Mammary epithelial cell (primary cell): ENCODE measurements at regions of chr1 and their contacts with region 1.

Region 1: DNA sequence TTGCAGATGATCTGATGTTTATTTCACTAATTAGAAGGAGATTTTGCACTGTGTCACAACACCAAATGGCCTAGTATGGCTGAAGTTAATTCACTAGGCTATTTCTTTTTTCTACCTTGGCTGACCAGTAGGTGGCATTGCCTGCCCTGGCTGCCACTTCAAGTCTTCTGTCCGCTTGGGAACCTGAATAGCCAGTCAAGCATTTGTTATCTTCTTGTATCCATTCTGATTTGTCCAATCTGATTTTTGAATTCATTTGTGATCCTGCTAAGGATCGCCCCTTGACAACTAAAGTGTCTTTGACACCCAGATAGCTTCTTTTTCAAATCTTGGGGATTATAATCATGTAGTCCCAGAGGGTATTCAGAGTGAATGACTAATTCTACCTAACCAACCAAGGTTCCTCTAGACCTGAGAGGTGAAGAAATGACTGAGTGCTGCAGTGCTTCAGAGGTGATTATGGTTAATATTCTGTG is 99.4 kb downstream of the GIPC2 start:
- DNase-seq: peak; percentile 63
- H3K4me3 ChIP-seq: no peak overlapping the region
- H3K27ac ChIP-seq: no peak overlapping the region
- H3K4me1 ChIP-seq: no peaks in the 10 kb centered on the region
- H3K27me3 ChIP-seq: no peaks in the 10 kb centered on the region
- CTCF ChIP-seq: peak; percentile 86 to 88

Region 2: GRCh38 chr1:78333502-78333901 is 188.4 kb after region 1 on chr1:
- CTCF ChIA-PET with region 1: no interaction called
- dilution Hi-C with region 1: no loop called
- in situ Hi-C with region 1: no loop called
- intact Hi-C with region 1: loop called (anchors 5 kb)
- DNase-seq: peak; percentile 11
- H3K4me3 ChIP-seq: no peak overlapping the region
- H3K27ac ChIP-seq: no peak overlapping the region
- H3K4me1 ChIP-seq: peaks cover 3% of the 10 kb centered on the region
- H3K27me3 ChIP-seq: no peaks in the 10 kb centered on the region
- CTCF ChIP-seq: peak; percentile 76 to 91

Region 3: DNA sequence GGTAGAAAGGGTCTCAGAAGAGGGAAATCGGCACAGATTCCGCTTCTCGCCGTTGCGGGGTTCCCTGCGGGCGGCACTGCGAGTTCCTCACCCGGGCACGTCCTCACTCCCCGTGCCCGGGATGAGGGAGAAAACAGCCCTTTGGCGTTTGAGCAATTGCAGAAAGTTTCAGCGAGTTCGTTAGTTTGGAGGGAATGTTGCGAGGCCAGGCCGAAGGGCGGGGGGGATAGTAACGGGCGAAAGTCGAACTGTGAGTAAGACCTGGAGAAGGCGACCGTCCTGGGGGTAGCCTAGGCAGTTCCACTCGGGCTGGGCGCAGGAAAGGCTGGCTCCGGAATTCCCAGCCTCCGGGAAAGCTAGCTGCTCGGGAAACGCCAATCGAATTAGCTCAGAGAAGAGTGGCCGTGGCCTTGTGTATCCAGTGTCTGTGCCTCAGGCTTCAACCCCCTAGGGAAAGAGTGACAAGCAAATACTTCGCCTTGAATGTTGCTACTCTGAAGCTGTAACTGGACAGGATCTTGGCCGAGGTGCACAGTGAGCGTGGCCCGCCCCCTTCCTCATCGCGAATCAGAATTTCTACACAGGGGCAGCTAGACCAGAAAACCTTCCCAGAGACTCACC is 346.4 kb after region 1 on chr1:
- CTCF ChIA-PET with region 1: no interaction called
- dilution Hi-C with region 1: no loop called
- in situ Hi-C with region 1: no loop called
- intact Hi-C with region 1: loop called (anchors 5 kb)
- DNase-seq: peak; percentile 36
- H3K4me3 ChIP-seq: peak overlapping the region; percentile 36 to 60 (median 56)
- H3K27ac ChIP-seq: no peak overlapping the region
- H3K4me1 ChIP-seq: peaks cover 8% of the 10 kb centered on the region
- H3K27me3 ChIP-seq: peaks cover 4% of the 10 kb centered on the region
- CTCF ChIP-seq: no peak

Region 4: GRCh38 chr1:78607334-78607927 is 462.3 kb after region 1 on chr1:
- CTCF ChIA-PET with region 1: no interaction called
- dilution Hi-C with region 1: loop called (anchors 5 kb)
- in situ Hi-C with region 1: loop called in 1 of 2 experiments (anchors 5 kb)
- intact Hi-C with region 1: loop called (anchors 1 kb)
- DNase-seq: no peak
- H3K4me3 ChIP-seq: no peak overlapping the region
- H3K27ac ChIP-seq: no peak overlapping the region
- H3K4me1 ChIP-seq: no peaks in the 10 kb centered on the region
- H3K27me3 ChIP-seq: no peaks in the 10 kb centered on the region
- CTCF ChIP-seq: peak; percentile 44 to 56